Panc1 (cell line): ENCODE measurements at regions of chr2 and their contacts with region 1.

Region 1: DNA sequence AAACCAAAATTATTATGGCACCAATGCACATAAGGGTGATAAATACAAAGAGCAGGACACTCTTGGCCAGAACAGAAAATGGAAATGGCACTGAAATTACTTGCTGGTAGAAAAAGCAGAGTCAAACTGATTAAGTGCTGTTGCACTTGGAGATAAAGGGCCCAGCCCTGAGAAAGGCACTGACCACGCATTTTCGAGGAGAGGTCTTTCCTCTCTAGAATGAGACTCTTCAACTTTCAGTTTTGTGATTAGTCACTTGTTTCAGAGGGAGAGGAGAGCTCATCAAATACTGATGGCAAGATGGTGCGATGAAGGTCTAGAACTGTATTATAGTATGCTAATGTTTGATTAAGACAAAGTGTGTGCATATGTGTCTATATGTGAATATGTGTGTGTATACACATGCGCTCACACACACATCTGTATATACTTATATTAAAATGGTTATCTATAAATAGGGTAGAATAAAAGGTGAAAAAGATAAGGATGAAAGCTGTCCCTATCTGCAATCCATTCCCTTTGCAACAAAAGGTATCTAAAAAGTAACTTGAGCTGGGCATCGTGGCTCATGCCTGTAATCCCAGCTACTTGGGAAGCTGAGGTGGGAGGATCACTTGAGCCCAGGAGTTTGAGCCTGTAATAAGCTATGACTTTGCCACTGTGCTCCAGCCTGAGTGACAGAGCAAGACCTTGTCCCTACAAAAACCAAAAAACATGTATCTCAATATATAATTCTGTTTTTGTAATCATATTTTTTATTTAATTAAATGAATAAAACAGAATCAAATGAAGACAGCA is 48.8 kb upstream of the ZDBF2 start:
- DNase-seq: no peak
- ATAC-seq: no peak
- H3K4me3 ChIP-seq: no peak overlapping the region
- H3K27ac ChIP-seq: no peak overlapping the region
- H3K4me1 ChIP-seq: no peaks in the 10 kb centered on the region
- H3K27me3 ChIP-seq: peaks cover 2% of the 10 kb centered on the region
- CTCF ChIP-seq: no peak

Region 2: GRCh38 chr2:206045251-206045650 is 180.4 kb before region 1 on chr2:
- CTCF ChIA-PET with region 1: no interaction called
- POLR2A ChIA-PET with region 1: no interaction called
- in situ Hi-C with region 1: no loop called
- intact Hi-C with region 1: no loop called
- DNase-seq: no peak
- ATAC-seq: no peak
- H3K4me3 ChIP-seq: no peak overlapping the region
- H3K27ac ChIP-seq: no peak overlapping the region
- H3K4me1 ChIP-seq: no peaks in the 10 kb centered on the region
- H3K27me3 ChIP-seq: no peaks in the 10 kb centered on the region
- CTCF ChIP-seq: no peak

Region 3: GRCh38 chr2:206201075-206201848 is 24.4 kb before region 1 on chr2:
- CTCF ChIA-PET with region 1: no interaction called
- POLR2A ChIA-PET with region 1: no interaction called
- in situ Hi-C with region 1: no loop called
- intact Hi-C with region 1: no loop called
- DNase-seq: no peak
- ATAC-seq: no peak
- H3K4me3 ChIP-seq: no peak overlapping the region
- H3K27ac ChIP-seq: no peak overlapping the region
- H3K4me1 ChIP-seq: no peaks in the 10 kb centered on the region
- H3K27me3 ChIP-seq: no peaks in the 10 kb centered on the region
- CTCF ChIP-seq: no peak

Region 4: DNA sequence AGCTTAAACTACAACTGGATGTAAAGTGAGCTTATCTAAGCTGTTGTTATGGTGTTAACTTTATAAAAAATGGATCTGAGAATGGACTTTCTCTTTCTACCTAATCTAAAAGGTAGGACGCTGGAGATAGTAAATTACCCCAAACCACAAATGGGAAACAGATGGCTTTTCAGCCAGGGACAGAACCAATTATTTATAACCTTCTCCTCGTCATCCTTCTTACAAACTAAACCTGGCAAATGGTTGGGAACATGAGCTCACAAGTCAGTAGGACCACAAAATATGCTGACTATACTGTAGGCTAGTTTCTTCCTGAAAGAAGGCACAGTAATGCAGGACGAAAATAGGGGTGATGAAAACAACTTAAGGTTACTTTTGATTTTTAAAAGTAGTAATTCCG is 16.1 kb after region 1 on chr2:
- CTCF ChIA-PET with region 1: no interaction called
- POLR2A ChIA-PET with region 1: no interaction called
- in situ Hi-C with region 1: no loop called
- intact Hi-C with region 1: loop called (anchors 1 kb)
- DNase-seq: no peak
- ATAC-seq: no peak
- H3K4me3 ChIP-seq: no peak overlapping the region
- H3K27ac ChIP-seq: no peak overlapping the region
- H3K4me1 ChIP-seq: no peaks in the 10 kb centered on the region
- H3K27me3 ChIP-seq: no peaks in the 10 kb centered on the region
- CTCF ChIP-seq: no peak

Region 5: GRCh38 chr2:207792244-207792785 is 1566.7 kb after region 1 on chr2:
- CTCF ChIA-PET with region 1: no interaction called
- POLR2A ChIA-PET with region 1: no interaction called
- in situ Hi-C with region 1: no loop called
- intact Hi-C with region 1: no loop called
- DNase-seq: no peak
- ATAC-seq: peak; percentile 73
- H3K4me3 ChIP-seq: no peak overlapping the region
- H3K27ac ChIP-seq: no peak overlapping the region
- H3K4me1 ChIP-seq: no peaks in the 10 kb centered on the region
- H3K27me3 ChIP-seq: no peaks in the 10 kb centered on the region
- CTCF ChIP-seq: no peak